Gastrocnemius medialis (tissue), 4 donors: ENCODE measurements at regions of chr2 and their contacts with region 1.

Region 1: GRCh38 chr2:212892193-212892592 is 259.2 kb downstream of the IKZF2 start:
- DNase-seq: no peak
- ATAC-seq: no peak
- H3K4me3 ChIP-seq: no peak overlapping the region
- H3K27ac ChIP-seq: no peak overlapping the region
- H3K4me1 ChIP-seq: peaks cover 0 to 11% of the 10 kb centered on the region in 2 donors
- H3K27me3 ChIP-seq: no peaks in the 10 kb centered on the region
- CTCF ChIP-seq: no peak
- POLR2A ChIP-seq: no peak

Region 2: DNA sequence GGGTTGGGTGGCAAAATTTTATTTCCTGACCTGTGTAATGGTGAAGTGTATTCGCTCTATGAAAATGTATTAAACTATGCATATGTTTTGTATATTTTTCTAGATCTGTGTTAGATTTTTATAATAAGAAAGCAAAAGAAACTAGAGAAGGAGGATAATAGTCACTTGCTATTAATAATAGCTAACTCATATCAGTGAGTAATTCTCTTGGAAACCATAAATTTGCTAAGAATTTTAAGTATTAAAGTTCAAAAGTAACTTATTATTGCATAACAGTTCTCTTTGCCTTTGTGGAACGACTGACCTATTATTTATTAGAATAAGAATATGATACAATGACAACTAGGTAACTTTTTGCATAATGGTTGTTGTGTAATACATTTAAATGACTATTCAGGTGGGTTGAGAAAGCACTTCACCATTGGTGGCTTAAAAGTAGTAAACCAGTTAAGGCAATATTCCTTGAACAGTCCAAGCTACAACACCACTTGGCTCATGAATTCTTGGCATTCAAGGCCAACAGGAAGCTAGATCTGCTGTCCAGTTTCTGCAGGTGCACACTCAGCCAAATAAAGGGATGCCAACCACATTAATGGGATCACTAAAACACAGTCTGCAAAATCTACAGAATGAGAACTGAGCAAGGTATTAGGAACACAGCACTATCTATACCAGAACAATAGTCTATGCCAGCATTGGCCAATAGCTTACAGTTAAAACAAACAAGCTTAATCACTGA is 1414.5 kb before region 1 on chr2:
- in situ Hi-C with region 1: no loop called
- intact Hi-C with region 1: no loop called
- DNase-seq: no peak
- ATAC-seq: no peak
- H3K4me3 ChIP-seq: no peak overlapping the region
- H3K27ac ChIP-seq: no peak overlapping the region
- H3K4me1 ChIP-seq: no peaks in the 10 kb centered on the region
- H3K27me3 ChIP-seq: no peaks in the 10 kb centered on the region
- CTCF ChIP-seq: no peak
- POLR2A ChIP-seq: no peak

Region 3: DNA sequence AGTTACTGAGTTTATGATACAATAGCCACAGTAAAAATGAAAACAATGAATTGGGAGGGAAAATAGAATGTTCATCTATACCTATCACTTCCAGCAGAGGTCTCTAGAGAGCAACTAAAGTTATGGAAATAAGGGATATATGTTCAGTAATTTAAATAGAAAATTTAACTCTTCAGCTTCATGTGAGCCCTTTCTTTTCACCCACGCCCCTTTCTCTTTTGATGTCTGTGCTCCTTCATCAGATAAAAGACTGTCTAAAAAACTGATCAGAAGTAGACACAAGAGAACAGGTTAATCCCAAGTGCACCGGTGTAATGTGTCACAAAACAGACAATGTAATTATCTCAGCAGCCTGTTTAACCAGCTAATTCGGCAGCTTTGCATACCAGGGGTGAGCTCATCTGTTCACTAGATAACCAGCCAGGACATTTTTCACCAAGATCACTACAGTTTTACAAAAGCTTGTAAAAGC is 115.1 kb before region 1 on chr2:
- in situ Hi-C with region 1: no loop called
- intact Hi-C with region 1: loop called (anchors 2 kb)
- DNase-seq: no peak
- ATAC-seq: no peak
- H3K4me3 ChIP-seq: peak overlapping the region in 1 of 4 donors; percentile 22
- H3K27ac ChIP-seq: no peak overlapping the region
- H3K4me1 ChIP-seq: no peaks in the 10 kb centered on the region
- H3K27me3 ChIP-seq: no peaks in the 10 kb centered on the region
- CTCF ChIP-seq: peak in 4 of 5 experiments; percentile 48 to 66 (median 63)
- POLR2A ChIP-seq: no peak